Naive thymus-derived CD4-positive, alpha-beta T cell (primary cell): ENCODE measurements at regions of chr1 and their contacts with region 1.

Region 1: DNA sequence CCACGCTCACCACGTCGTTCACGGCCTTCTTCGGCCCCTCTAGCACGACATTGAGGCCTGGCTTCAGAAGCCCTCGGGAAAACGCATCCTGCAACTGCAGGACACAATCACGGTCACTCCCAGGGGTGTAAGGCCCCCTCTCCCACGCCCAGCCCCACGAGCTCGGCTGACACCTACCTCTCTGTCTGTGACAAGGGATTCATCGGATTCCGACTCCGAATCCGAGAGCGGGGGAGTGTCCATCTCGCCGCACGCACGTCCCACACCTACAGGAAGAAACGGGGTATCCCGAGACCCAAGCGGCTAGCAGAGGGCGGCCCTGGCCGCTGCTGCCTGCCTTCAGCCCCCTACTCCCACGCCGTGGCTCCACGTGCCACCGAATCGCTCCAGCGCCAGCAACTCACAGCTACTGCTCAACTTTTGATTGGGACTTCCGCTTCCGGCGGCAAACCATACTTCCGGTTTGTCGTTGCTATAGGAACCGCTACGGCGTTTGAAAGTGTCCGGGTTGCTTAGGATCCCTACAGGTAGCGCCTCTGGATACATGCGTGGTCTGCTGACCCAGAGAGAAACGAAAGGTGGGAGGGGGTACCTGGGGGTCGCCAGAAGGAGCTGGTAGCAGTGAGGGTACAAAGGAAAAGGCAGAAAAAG is at the starts of genes CFAP57 and EBNA1BP2:
- DNase-seq: peak; percentile 78 to 95 (median 92)
- ATAC-seq: peak; percentile 82
- H3K4me3 ChIP-seq: peak within 1 kb of the TSS; percentile 95
- H3K4me3 Mint-ChIP-seq: peak within 1 kb of the TSS; percentile 90 to 100 (median 99)
- H3K27ac ChIP-seq: peak within 1 kb of the TSS; percentile 74
- H3K27ac Mint-ChIP-seq: peak within 1 kb of the TSS; percentile 89 to 98 (median 95)
- H3K4me1 ChIP-seq: peaks cover 10 to 13% of the 10 kb centered on the region in 2 donors
- H3K4me1 Mint-ChIP-seq: peaks cover 14 to 49% (median 33%) of the 10 kb centered on the region in 7 donors
- H3K27me3 ChIP-seq: peaks cover 0 to 3% of the 10 kb centered on the region in 2 donors
- H3K27me3 Mint-ChIP-seq: peaks cover 14 to 25% (median 19%) of the 10 kb centered on the region in 5 donors
- total RNA-seq, gene CFAP57: 0.07 TPM in 1 of 5 experiments, not detected in the others
- total RNA-seq, gene EBNA1BP2: 17.8 to 46.1 (median 22.7) TPM

Region 2: GRCh38 chr1:42657971-42658879 is 513.8 kb before region 1 on chr1 and contains the start of gene PPIH:
- CTCF ChIA-PET with region 1: no interaction called
- POLR2A ChIA-PET with region 1: no interaction called
- intact Hi-C with region 1: loop called (anchors 1 kb)
- DNase-seq: peak; percentile 82 to 94 (median 92)
- ATAC-seq: peak; percentile 99
- H3K4me3 ChIP-seq: peak within 1 kb of the TSS; percentile 90
- H3K4me3 Mint-ChIP-seq: peak within 1 kb of the TSS; percentile 94 to 99 (median 99)
- H3K27ac ChIP-seq: peak within 1 kb of the TSS; percentile 75
- H3K27ac Mint-ChIP-seq: peak within 1 kb of the TSS; percentile 84 to 98 (median 96)
- H3K4me1 ChIP-seq: peaks cover 17 to 22% of the 10 kb centered on the region in 2 donors
- H3K4me1 Mint-ChIP-seq: peaks cover 20 to 48% (median 44%) of the 10 kb centered on the region in 7 donors
- H3K27me3 ChIP-seq: no peaks in the 10 kb centered on the region
- H3K27me3 Mint-ChIP-seq: peaks cover 0 to 3% (median 0%) of the 10 kb centered on the region in 5 donors
- total RNA-seq, gene PPIH: 28.0 to 76.8 (median 40.7) TPM

Region 3: DNA sequence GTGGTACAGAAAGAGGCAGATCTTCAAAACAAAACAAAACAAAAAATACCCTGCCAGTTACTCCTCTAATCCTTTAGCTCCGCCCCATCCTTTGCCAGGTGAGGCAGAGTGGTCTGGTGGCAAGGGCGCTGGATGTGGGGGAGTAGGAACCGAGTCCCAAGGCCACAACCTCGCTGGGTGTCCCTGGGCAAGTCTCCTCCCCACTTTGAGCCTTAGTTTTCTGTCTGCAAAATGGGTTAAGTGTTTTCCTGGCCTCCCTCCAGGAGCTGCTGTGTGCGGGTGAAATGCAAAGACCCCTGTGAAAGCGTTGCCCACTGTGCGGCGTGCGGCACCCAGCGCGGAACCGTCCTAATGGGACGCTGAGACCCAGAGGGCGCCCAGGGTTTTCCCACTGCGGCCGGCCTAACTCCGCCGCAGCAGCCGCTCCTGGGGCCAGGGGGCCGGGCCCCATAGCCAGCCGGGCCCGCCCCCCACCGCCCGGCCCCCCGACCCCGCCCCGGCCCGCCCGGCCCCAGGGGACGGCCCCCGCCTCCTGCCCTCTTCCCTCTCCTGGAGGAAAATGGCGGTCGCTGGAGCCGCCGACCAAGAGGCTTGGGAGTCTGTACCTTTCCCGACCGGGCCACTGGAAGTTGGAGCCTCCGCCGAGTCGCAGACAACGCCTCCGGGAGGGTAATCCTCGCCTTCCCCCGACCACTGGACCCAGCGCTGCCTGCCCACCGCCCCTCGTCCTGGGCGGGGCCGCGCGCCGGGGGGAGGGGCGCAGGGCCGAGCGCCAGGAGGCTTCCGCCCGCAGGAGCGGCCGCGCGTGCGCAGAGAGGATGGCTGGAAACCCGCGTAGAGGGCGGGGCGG is 355.2 kb before region 1 on chr1 and contains the starts of genes ERMAP and SVBP:
- CTCF ChIA-PET with region 1: no interaction called
- POLR2A ChIA-PET with region 1: no interaction called
- intact Hi-C with region 1: loop called (anchors 1 kb)
- DNase-seq: peak; percentile 86 to 98 (median 91)
- ATAC-seq: peak; percentile 97
- H3K4me3 ChIP-seq: peak within 1 kb of the TSS; percentile 69
- H3K4me3 Mint-ChIP-seq: peak within 1 kb of the TSS; percentile 76 to 90 (median 84)
- H3K27ac ChIP-seq: peak within 1 kb of the TSS; percentile 89
- H3K27ac Mint-ChIP-seq: peak within 1 kb of the TSS; percentile 64 to 94 (median 86)
- H3K4me1 ChIP-seq: peaks cover 6 to 10% of the 10 kb centered on the region in 2 donors
- H3K4me1 Mint-ChIP-seq: peaks cover 19 to 35% (median 29%) of the 10 kb centered on the region in 7 donors
- H3K27me3 ChIP-seq: no peaks in the 10 kb centered on the region
- H3K27me3 Mint-ChIP-seq: peaks cover 0 to 10% (median 0%) of the 10 kb centered on the region in 5 donors
- total RNA-seq, gene ERMAP: 6.1 to 10.3 (median 6.7) TPM
- total RNA-seq, gene SVBP: 12.7 to 22.2 (median 17.8) TPM

Region 4: DNA sequence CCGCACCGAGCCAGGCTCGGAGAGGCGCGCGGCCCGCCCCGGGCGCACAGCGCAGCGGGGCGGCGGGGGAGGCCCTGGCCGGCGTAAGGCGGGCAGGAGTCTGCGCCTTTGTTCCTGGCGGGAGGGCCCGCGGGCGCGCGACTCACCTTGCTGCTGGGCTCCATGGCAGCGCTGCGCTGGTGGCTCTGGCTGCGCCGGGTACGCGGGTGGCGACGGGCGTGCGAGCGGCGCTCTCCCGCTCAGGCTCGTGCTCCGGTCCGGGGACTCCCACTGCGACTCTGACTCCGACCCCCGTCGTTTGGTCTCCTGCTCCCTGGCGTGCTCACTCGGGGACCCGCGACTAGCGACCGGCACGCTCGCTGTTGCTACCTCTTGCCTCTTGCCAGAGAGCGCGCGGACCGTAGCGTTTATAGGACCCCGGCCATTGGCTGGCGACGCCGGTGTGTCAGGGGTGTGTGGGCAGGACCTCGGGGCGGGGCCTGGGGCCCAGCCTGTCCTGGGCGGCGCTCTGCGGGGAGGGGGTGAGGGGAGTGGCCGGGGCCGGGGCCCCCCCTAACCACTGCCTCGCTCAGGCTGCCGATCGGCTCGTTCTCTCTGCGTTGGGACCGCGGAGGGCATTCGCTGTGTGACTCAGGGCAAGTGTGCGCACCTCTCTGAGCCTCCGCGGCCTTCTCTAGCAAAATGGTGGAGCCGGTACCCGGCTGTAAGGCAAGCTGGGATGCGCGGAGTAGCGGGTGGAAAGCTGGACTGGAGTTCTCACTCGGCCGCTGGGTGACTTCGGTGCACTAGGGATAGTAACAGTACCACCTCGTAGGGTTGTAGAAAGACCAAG is 213.3 kb before region 1 on chr1 and contains the start of gene SLC2A1:
- CTCF ChIA-PET with region 1: no interaction called
- POLR2A ChIA-PET with region 1: interaction called, 4 read pairs
- intact Hi-C with region 1: loop called (anchors 1 to 2 kb)
- DNase-seq: peak; percentile 84 to 95 (median 92)
- ATAC-seq: peak; percentile 96
- H3K4me3 ChIP-seq: peak within 1 kb of the TSS; percentile 96
- H3K4me3 Mint-ChIP-seq: peak within 1 kb of the TSS; percentile 95 to 99 (median 98)
- H3K27ac ChIP-seq: peak within 1 kb of the TSS; percentile 88
- H3K27ac Mint-ChIP-seq: peak within 1 kb of the TSS; percentile 94 to 99 (median 97)
- H3K4me1 ChIP-seq: peaks cover 34 to 40% of the 10 kb centered on the region in 2 donors
- H3K4me1 Mint-ChIP-seq: peaks cover 44 to 65% (median 56%) of the 10 kb centered on the region in 7 donors
- H3K27me3 ChIP-seq: no peaks in the 10 kb centered on the region
- H3K27me3 Mint-ChIP-seq: peaks cover 0 to 18% (median 0%) of the 10 kb centered on the region in 5 donors
- total RNA-seq, gene SLC2A1: 43.6 to 123 (median 73.1) TPM

Region 5: DNA sequence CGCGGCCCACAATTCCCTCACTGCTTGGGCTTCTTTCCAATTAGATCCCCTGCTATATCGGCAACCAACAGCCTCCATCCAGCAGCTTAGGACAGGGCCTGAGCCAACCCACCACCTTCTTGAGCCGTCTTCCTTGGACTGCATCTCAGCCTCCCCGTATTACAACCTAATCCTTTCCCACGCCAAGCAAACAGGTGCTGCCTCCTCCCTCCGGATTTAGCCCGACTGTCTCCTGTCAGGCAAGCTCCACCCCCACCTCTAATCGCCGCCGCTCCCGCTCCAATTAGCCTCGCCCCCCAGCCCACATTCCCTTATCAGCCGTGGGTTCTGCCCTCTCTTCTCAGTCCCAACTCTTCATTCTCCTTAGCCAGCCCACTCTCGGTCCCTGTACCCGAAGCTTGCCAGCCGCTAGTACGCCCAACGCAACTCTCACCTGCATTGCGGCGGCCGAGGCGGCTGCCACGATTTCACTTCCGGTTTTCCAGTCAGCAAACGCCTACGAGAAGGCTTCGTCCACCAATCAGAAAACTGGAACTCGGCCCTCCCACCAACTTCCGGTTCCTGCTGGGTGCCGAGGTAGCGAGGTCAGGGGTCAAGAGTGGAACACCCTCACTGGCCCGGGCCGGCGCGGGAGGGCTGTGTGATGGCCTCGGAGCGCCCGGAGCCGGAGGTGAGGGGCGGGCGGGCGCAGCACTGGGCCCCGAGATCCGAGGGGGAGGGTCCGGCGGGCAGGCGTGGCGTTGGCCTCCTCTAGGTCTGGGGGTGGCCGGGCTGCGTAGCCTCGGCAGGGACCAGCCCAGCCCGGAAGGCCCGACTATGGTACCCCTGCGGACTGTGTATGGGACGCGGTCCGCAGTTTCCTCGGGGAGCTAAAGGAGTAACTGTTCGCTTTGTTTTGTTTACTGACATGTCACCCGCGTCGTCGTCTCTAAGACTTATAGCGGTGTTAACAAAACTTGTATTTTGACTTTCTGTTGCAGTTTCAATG is 217.6 kb after region 1 on chr1 and contains the starts of genes MED8 and SZT2:
- CTCF ChIA-PET with region 1: no interaction called
- POLR2A ChIA-PET with region 1: interaction called, 3 read pairs
- intact Hi-C with region 1: loop called in 1 of 2 experiments (anchors 1 kb)
- DNase-seq: peak; percentile 75 to 91 (median 88)
- ATAC-seq: peak; percentile 98
- H3K4me3 ChIP-seq: peak within 1 kb of the TSS; percentile 96
- H3K4me3 Mint-ChIP-seq: peak within 1 kb of the TSS; percentile 95 to 100 (median 100)
- H3K27ac ChIP-seq: peak within 1 kb of the TSS; percentile 93
- H3K27ac Mint-ChIP-seq: peak within 1 kb of the TSS; percentile 95 to 100 (median 99)
- H3K4me1 ChIP-seq: peaks cover 20 to 21% of the 10 kb centered on the region in 2 donors
- H3K4me1 Mint-ChIP-seq: peaks cover 42 to 69% (median 56%) of the 10 kb centered on the region in 7 donors
- H3K27me3 ChIP-seq: no peaks in the 10 kb centered on the region
- H3K27me3 Mint-ChIP-seq: no peaks in the 10 kb centered on the region
- total RNA-seq, gene MED8: 14.5 to 37.8 (median 30.1) TPM
- total RNA-seq, gene SZT2: 80.5 to 153 (median 131) TPM

Region 6: GRCh38 chr1:43554444-43554992 is 382.5 kb after region 1 on chr1:
- CTCF ChIA-PET with region 1: no interaction called
- POLR2A ChIA-PET with region 1: no interaction called
- intact Hi-C with region 1: no loop called
- DNase-seq: peak in 4 of 9 donors; percentile 11 to 33 (median 21)
- ATAC-seq: peak; percentile 55
- H3K4me3 ChIP-seq: no peak overlapping the region
- H3K4me3 Mint-ChIP-seq: no peak overlapping the region
- H3K27ac ChIP-seq: no peak overlapping the region
- H3K27ac Mint-ChIP-seq: peak overlapping the region in 2 of 9 donors; percentile 19 to 44
- H3K4me1 ChIP-seq: no peaks in the 10 kb centered on the region
- H3K4me1 Mint-ChIP-seq: peaks cover 0 to 13% (median 5%) of the 10 kb centered on the region in 7 donors
- H3K27me3 ChIP-seq: no peaks in the 10 kb centered on the region
- H3K27me3 Mint-ChIP-seq: peaks cover 2 to 17% (median 13%) of the 10 kb centered on the region in 5 donors

Region 7: GRCh38 chr1:43706598-43707495 is 534.8 kb after region 1 on chr1:
- CTCF ChIA-PET with region 1: no interaction called
- POLR2A ChIA-PET with region 1: no interaction called
- intact Hi-C with region 1: loop called (anchors 2 to 5 kb)
- DNase-seq: peak; percentile 84 to 94 (median 89)
- ATAC-seq: peak; percentile 98
- H3K4me3 ChIP-seq: peak overlapping the region; percentile 92
- H3K4me3 Mint-ChIP-seq: peak overlapping the region; percentile 82 to 90 (median 88)
- H3K27ac ChIP-seq: peak overlapping the region; percentile 79
- H3K27ac Mint-ChIP-seq: peak overlapping the region in 7 of 9 donors; percentile 32 to 87 (median 79)
- H3K4me1 ChIP-seq: peaks cover 7 to 10% of the 10 kb centered on the region in 2 donors
- H3K4me1 Mint-ChIP-seq: peaks cover 7 to 46% (median 27%) of the 10 kb centered on the region in 7 donors
- H3K27me3 ChIP-seq: no peaks in the 10 kb centered on the region
- H3K27me3 Mint-ChIP-seq: no peaks in the 10 kb centered on the region